Activated CD8-positive, alpha-beta T cell treated with anti-CD3 and anti-CD28 coated beads for 36 hours (primary cell): ENCODE measurements at regions of chr18 and their contacts with region 1.

Region 1: DNA sequence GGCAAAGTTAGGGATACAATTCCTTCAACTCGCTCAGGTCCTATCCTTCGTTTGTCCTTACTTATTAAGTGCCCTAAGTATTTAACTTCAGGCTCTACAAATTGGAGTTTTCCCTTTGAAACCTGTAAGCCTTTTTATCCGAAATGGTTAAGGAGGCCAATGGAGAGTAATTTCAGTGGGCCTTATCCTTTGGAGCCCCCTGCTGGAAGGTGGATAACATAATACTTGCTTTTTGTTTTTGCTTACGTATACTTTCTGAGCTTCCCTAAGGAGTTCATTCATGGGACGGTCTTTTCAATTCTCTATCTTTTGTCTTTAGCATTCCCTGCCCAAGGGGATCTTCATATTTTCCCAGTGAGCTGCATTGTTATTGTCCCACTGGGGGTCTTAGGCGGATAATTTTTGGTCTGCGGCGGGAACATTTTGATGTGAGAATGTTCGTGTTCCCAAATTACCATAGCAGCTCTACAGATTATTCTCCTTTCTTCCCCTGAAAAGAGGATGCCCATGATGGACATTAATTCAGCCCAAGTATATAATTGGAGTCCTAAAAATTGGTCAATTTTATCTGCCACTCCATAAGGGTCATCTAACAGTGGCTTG is 34.4 kb upstream of the TRAPPC8 start:
- DNase-seq: peak; percentile 19
- ATAC-seq: no peak
- H3K4me3 Mint-ChIP-seq: no peak overlapping the region
- H3K27ac Mint-ChIP-seq: no peak overlapping the region
- H3K4me1 Mint-ChIP-seq: no peaks in the 10 kb centered on the region
- H3K27me3 Mint-ChIP-seq: no peaks in the 10 kb centered on the region
- CTCF ChIP-seq: peak; percentile 68

Region 2: GRCh38 chr18:31965316-31965970 is 11.9 kb before region 1 on chr18:
- CTCF ChIA-PET with region 1: interaction called, 13 read pairs
- POLR2A ChIA-PET with region 1: no interaction called
- intact Hi-C with region 1: no loop called
- DNase-seq: no peak
- ATAC-seq: no peak
- H3K4me3 Mint-ChIP-seq: no peak overlapping the region
- H3K27ac Mint-ChIP-seq: no peak overlapping the region
- H3K4me1 Mint-ChIP-seq: no peaks in the 10 kb centered on the region
- H3K27me3 Mint-ChIP-seq: no peaks in the 10 kb centered on the region
- CTCF ChIP-seq: no peak

Region 3: DNA sequence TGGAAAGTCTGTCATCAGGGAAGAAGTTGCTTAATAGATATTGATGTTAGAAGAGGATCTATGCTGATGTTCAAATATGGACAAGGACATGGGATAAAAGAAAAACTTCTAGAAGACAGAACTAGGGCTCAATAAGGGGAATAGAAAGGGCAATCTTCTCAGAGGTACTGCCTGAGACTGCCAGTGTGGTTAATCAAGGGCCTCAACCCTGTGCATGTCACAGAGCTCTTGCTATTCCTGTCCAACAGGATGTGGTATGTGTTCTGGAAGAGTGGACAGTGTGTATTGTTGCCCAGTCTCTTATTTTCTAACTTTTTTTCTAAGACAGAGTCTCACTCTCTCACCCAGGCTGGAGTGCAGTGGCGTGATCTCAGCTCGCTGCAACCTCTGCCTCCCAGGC is 13.5 kb after region 1 on chr18:
- CTCF ChIA-PET with region 1: interaction called, 11 read pairs
- POLR2A ChIA-PET with region 1: interaction called, 4 read pairs
- intact Hi-C with region 1: no loop called
- DNase-seq: no peak
- ATAC-seq: no peak
- H3K4me3 Mint-ChIP-seq: no peak overlapping the region
- H3K27ac Mint-ChIP-seq: no peak overlapping the region
- H3K4me1 Mint-ChIP-seq: no peaks in the 10 kb centered on the region
- H3K27me3 Mint-ChIP-seq: no peaks in the 10 kb centered on the region
- CTCF ChIP-seq: no peak